PC-3 (cell line): ENCODE measurements at regions of chr17 and their contacts with region 1.

Region 1: DNA sequence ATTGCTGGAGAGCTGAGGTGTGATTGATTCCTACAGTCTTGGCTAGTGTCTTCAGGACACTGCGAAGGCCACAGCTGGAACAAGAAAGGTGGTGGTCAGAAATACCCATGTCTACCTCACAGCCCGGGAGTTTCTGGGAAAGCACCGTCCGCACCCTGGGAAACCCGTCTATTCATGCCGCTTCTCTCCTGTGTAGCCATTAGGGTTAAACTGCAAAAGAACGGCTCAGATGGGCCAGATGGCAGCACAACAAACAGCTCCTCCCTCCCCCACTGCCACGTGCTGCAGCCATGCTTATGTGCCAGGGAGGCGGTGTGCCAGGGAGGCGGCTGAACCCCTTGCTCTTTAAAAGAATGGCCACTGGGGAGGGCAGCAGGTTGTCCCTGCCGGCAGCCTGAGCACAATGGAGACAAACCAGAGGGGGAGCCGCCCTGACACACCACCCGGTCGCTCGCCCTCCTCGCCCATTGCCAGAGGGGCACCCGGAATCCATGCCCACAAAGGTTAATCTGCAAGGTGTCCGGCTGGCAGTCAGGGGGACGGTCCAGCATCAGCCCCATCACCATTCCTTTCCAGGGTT is 65.2 kb downstream of the CYTH1 start:
- DNase-seq: peak; percentile 59
- ATAC-seq: peak; percentile 65
- H3K4me3 ChIP-seq: peak overlapping the region; percentile 65
- H3K27ac ChIP-seq: peak overlapping the region; percentile 34
- H3K4me1 ChIP-seq: peaks cover 28% of the 10 kb centered on the region
- H3K27me3 ChIP-seq: no peaks in the 10 kb centered on the region
- CTCF ChIP-seq: no peak

Region 2: GRCh38 chr17:78745407-78746088 is 28.6 kb after region 1 on chr17:
- CTCF ChIA-PET with region 1: no interaction called
- POLR2A ChIA-PET with region 1: no interaction called
- intact Hi-C with region 1: loop called (anchors 1 kb)
- DNase-seq: peak; percentile 65
- ATAC-seq: peak; percentile 18
- H3K4me3 ChIP-seq: no peak overlapping the region
- H3K27ac ChIP-seq: no peak overlapping the region
- H3K4me1 ChIP-seq: peaks cover 11% of the 10 kb centered on the region
- H3K27me3 ChIP-seq: no peaks in the 10 kb centered on the region
- CTCF ChIP-seq: peak; percentile 79